Body of pancreas (tissue), 4 donors: ENCODE measurements at regions of chr1 and their contacts with region 1.

Region 1: GRCh38 chr1:107420559-107420958 is 279.7 kb downstream of the NTNG1 start:
- DNase-seq: no peak
- ATAC-seq: no peak
- H3K4me3 ChIP-seq: no peak overlapping the region
- H3K27ac ChIP-seq: no peak overlapping the region
- H3K4me1 ChIP-seq: no peaks in the 10 kb centered on the region
- H3K27me3 ChIP-seq: no peaks in the 10 kb centered on the region
- CTCF ChIP-seq: no peak
- POLR2A ChIP-seq: no peak

Region 2: DNA sequence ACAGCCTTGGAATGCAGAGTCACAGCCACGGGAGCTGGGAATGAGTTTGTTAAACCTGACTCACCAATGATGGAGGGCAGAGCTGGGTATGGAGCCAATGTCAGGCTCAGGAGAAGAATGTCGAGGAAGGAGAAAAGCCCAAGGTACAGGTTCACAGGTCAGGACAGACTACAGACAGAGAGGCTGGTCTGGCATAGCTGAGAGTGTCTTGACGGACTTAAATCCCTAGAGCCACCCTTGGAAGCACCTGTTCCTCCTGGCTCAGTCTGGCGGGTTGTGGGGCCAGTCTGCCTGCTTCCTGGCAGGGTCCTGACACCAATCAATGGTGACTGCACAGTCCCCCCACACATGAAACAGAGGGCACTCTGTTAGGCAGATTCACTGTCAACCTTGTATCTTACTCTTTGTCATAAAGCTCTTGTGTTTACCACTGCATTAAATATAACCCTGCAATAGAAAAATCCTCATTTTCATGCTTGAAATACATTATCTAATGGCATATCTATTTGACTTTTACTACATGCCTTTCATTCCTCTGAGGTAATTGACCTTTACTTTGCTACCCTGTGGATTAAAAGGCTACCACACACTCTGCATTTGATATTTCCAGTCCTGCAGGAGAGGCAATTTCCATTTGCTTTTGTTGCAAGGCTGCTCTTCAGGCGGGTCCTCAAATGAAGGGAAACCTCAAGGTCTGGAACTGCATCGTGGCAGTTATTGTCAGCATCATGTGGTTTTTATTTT is 41.9 kb before region 1 on chr1:
- intact Hi-C with region 1: no loop called
- DNase-seq: no peak
- ATAC-seq: no peak
- H3K4me3 ChIP-seq: no peak overlapping the region
- H3K27ac ChIP-seq: no peak overlapping the region
- H3K4me1 ChIP-seq: no peaks in the 10 kb centered on the region
- H3K27me3 ChIP-seq: no peaks in the 10 kb centered on the region
- CTCF ChIP-seq: no peak
- POLR2A ChIP-seq: no peak

Region 3: DNA sequence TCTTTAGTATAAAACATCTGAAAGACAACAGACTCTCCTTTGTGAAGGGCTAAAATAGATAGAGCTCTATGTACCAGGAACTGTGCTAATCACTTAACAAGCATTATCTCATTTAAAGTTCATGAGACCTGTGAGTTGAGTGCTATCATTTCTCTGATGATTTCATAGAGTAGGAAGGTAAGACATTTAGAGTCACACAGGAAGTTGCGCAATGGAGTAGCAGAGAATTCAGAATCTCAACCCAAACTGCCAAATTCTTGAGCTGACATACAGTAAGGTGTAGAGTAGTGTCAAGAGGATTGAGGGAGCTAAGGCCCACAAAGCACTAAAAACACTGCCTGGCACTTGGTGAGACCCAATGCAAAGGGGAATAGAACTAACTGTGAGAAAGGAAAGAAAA is 104.6 kb after region 1 on chr1:
- intact Hi-C with region 1: no loop called
- DNase-seq: no peak
- ATAC-seq: no peak
- H3K4me3 ChIP-seq: no peak overlapping the region
- H3K27ac ChIP-seq: no peak overlapping the region
- H3K4me1 ChIP-seq: no peaks in the 10 kb centered on the region
- H3K27me3 ChIP-seq: no peaks in the 10 kb centered on the region
- CTCF ChIP-seq: no peak
- POLR2A ChIP-seq: no peak

Region 4: GRCh38 chr1:107750358-107750959 is 329.9 kb after region 1 on chr1:
- intact Hi-C with region 1: loop called (anchors 10 kb)
- DNase-seq: peak; percentile 50 to 71 (median 57)
- ATAC-seq: no peak
- H3K4me3 ChIP-seq: no peak overlapping the region
- H3K27ac ChIP-seq: no peak overlapping the region
- H3K4me1 ChIP-seq: no peaks in the 10 kb centered on the region
- H3K27me3 ChIP-seq: no peaks in the 10 kb centered on the region
- CTCF ChIP-seq: peak; percentile 34 to 55 (median 48)
- POLR2A ChIP-seq: no peak